Testis (tissue), 5 donors: ENCODE measurements at regions of chr5 and their contacts with region 1.

Region 1: GRCh38 chr5:129767906-129768380 is 20.0 kb downstream of the MINAR2 start:
- DNase-seq: peak; percentile 88
- H3K4me3 ChIP-seq: no peak overlapping the region
- H3K27ac ChIP-seq: no peak overlapping the region
- H3K4me1 ChIP-seq: no peaks in the 10 kb centered on the region
- H3K27me3 ChIP-seq: no peaks in the 10 kb centered on the region
- CTCF ChIP-seq: peak; percentile 96 to 97 (median 96)
- POLR2A ChIP-seq: no peak

Region 2: DNA sequence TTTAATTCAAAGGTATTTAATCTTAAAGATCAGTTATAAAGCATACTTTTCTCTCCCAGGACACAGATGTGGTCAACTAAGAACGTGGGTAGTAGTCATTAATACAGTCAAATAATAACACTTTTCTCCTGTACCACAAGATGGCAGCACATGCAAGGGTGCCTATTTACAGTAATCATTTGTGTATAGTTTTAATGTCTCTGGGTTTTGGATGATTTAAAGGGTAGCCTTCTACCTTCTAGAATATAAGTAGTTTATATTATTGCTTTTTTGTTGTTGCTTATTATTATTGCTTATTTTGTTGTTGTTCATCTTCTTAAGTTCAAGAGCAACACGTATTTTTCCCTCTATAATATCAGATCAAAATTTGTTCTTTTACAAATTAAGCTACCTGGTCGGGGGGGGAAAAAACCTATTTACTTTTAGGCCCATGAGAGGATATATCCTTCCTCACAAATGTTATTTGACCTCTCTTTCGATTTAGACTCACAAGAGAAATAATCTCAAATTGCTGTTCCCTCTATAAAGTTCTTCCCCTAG is 862.3 kb before region 1 on chr5:
- intact Hi-C with region 1: loop called (anchors 10 kb)
- DNase-seq: peak; percentile 50
- H3K4me3 ChIP-seq: no peak overlapping the region
- H3K27ac ChIP-seq: no peak overlapping the region
- H3K4me1 ChIP-seq: no peaks in the 10 kb centered on the region
- H3K27me3 ChIP-seq: no peaks in the 10 kb centered on the region
- CTCF ChIP-seq: peak; percentile 59 to 84 (median 69)
- POLR2A ChIP-seq: no peak

Region 3: GRCh38 chr5:129836321-129836720 is 68.4 kb after region 1 on chr5:
- intact Hi-C with region 1: no loop called
- DNase-seq: no peak
- H3K4me3 ChIP-seq: no peak overlapping the region
- H3K27ac ChIP-seq: no peak overlapping the region
- H3K4me1 ChIP-seq: no peaks in the 10 kb centered on the region
- H3K27me3 ChIP-seq: no peaks in the 10 kb centered on the region
- CTCF ChIP-seq: no peak
- POLR2A ChIP-seq: no peak